Ovary (tissue), 10 donors: ENCODE measurements at regions of chr17 and their contacts with region 1.

Region 1: GRCh38 chr17:36818134-36818825 is 119.0 kb upstream of the LHX1 start:
- DNase-seq: no peak
- H3K4me3 ChIP-seq: no peak overlapping the region
- H3K27ac ChIP-seq: no peak overlapping the region
- H3K4me1 ChIP-seq: no peaks in the 10 kb centered on the region
- H3K27me3 ChIP-seq: no peaks in the 10 kb centered on the region
- CTCF ChIP-seq: no peak
- EP300 ChIP-seq: no peak
- POLR2A ChIP-seq: no peak

Region 2: DNA sequence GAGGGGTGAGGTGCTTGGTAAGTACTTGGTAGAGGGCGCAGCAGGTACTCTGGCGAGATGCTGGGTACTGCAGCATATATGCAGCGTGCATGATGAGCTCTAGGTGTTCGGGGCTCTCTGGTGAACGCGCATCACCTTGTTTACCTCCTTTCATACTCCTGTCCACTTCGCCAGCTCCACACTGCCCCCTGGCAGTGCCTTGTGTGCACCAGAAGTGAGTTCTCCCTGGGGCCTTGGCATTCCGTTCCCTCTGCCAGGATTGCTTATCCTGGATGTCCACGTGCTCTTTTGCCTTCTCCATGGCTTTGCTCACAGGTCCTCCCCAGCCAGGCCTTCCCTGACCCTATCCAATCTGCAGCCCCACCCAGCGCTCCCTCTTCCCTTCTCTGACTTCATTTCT is 62.7 kb before region 1 on chr17:
- intact Hi-C with region 1: no loop called
- DNase-seq: no peak
- H3K4me3 ChIP-seq: no peak overlapping the region
- H3K27ac ChIP-seq: no peak overlapping the region
- H3K4me1 ChIP-seq: no peaks in the 10 kb centered on the region
- H3K27me3 ChIP-seq: no peaks in the 10 kb centered on the region
- CTCF ChIP-seq: no peak
- EP300 ChIP-seq: no peak
- POLR2A ChIP-seq: no peak

Region 3: GRCh38 chr17:36784633-36785032 is 33.6 kb before region 1 on chr17:
- intact Hi-C with region 1: loop called in 1 of 4 experiments (anchors 1 kb)
- DNase-seq: no peak
- H3K4me3 ChIP-seq: no peak overlapping the region
- H3K27ac ChIP-seq: no peak overlapping the region
- H3K4me1 ChIP-seq: no peaks in the 10 kb centered on the region
- H3K27me3 ChIP-seq: no peaks in the 10 kb centered on the region
- CTCF ChIP-seq: no peak
- EP300 ChIP-seq: no peak
- POLR2A ChIP-seq: no peak